Activated naive CD8-positive, alpha-beta T cell treated with anti-CD3 and anti-CD28 coated beads, Interleukin-2, amount 10 ng/mL, durations not matched to agents 7 days and 5 days (primary cell): ENCODE measurements at regions of chr3 and their contacts with region 1.

Region 1: GRCh38 chr3:50194128-50194902 is 2.9 kb downstream of the GNAT1 start:
- DNase-seq: peak; percentile 89
- ATAC-seq: peak; percentile 89
- H3K4me3 Mint-ChIP-seq: peak overlapping the region; percentile 51
- H3K27ac Mint-ChIP-seq: no peak overlapping the region
- H3K4me1 Mint-ChIP-seq: peaks cover 3% of the 10 kb centered on the region
- H3K27me3 Mint-ChIP-seq: peaks cover 31% of the 10 kb centered on the region

Region 2: GRCh38 chr3:50205414-50206276 is 11.3 kb after region 1 on chr3:
- POLR2A ChIA-PET with region 1: interaction called, 10 read pairs
- DNase-seq: peak; percentile 55
- ATAC-seq: peak; percentile 61
- H3K4me3 Mint-ChIP-seq: no peak overlapping the region
- H3K27ac Mint-ChIP-seq: no peak overlapping the region
- H3K4me1 Mint-ChIP-seq: no peaks in the 10 kb centered on the region
- H3K27me3 Mint-ChIP-seq: peaks cover 52% of the 10 kb centered on the region

Region 3: GRCh38 chr3:50221411-50222168 is 27.3 kb after region 1 on chr3:
- POLR2A ChIA-PET with region 1: interaction called, 30 read pairs
- DNase-seq: no peak
- ATAC-seq: no peak
- H3K4me3 Mint-ChIP-seq: no peak overlapping the region
- H3K27ac Mint-ChIP-seq: peak overlapping the region; percentile 48
- H3K4me1 Mint-ChIP-seq: peaks cover 2% of the 10 kb centered on the region
- H3K27me3 Mint-ChIP-seq: peaks cover 11% of the 10 kb centered on the region

Region 4: DNA sequence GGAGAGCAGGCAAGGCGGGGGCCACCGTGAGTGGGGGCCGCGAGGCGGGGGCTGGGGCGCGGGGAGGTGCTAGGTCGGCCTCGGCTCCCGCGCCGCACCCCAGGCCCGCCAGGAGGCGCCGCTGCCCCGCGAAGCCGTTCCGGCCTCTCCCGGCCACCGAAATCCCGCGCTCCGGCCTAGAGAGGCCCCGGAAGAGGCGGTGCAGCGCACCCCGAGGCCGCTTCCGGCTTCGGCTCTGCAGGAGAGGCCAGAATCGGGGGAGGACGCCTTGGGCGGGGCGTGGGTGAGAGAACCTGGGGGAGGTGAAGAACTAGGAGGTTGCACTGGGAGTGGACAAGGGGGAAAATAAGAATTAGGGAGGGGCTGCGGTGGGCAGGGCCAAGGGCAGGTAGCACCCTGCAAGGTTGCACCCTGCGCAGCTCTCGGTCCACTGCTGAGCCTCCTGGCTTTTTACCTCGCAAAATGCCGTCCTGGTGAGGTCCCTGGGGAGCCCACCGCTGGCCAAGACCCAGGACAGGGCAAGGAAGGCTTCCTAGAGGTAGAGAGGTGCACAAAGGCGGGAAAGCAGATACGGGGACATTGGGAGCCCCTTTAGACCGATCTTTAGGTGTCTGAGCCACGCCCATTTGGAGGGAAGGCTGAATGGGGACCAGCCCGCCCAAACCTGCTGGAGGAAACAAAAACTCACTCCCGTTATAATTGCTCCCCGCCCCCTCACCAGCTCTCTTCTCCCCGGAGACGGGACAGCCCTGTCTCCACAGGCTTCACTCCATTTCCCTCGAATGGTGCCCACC is 33.3 kb after region 1 on chr3:
- POLR2A ChIA-PET with region 1: interaction called, 30 read pairs
- DNase-seq: peak; percentile 97
- ATAC-seq: peak; percentile 90
- H3K4me3 Mint-ChIP-seq: peak overlapping the region; percentile 97
- H3K27ac Mint-ChIP-seq: peak overlapping the region; percentile 94
- H3K4me1 Mint-ChIP-seq: peaks cover 17% of the 10 kb centered on the region
- H3K27me3 Mint-ChIP-seq: peaks cover 11% of the 10 kb centered on the region